ENCODE measurements at regions of chr1 and their contacts with region 1.

Region 1: DNA sequence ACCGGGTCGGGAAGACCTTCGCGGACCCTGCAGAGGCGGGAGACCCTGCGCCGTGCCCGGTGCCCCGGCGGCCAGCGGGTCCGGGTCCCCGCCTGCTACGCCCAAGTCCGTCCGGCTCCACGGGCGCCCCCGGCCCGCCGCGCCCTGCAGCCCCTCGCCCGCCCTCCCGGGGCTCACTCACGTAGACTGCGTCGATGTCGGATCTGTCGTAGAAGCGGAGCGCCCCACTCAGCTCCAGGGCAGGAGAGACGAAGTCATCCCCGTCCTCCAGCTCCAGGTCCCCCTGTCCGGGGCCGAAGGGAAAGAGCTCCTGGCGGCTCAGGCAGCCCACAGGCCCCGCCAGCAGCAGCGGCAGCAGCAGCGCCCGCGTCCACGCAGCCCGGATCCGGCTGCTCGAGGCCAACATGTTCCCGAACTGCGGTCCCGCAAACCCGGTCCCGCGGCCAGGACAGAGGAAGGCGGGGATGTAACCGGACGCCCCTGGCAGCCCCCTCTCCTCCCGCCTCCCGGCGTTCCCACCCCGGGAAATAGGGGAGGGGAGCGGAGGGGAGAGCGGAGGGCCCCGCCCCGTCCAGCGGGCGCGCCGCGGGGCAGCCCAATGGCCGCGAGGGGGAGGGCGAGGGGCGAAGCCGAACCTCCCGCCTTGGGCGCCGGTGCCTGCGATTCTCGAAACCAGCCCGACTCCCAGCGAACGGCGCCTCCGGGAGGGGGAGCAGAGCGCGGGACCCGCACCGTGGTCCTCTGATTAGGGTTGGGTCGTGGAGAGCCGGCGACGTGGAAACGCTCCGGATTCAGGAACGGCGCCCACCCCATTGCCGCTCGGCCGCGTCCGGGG is at the start of gene NID1:
- DNase-seq: peak; percentile 56
- CTCF ChIP-seq: peak; percentile 36

Region 2: GRCh38 chr1:235557495-235557894 is 507.4 kb before region 1 on chr1:
- CTCF ChIA-PET with region 1: no interaction called
- POLR2A ChIA-PET with region 1: no interaction called
- DNase-seq: no peak
- CTCF ChIP-seq: no peak

Region 3: DNA sequence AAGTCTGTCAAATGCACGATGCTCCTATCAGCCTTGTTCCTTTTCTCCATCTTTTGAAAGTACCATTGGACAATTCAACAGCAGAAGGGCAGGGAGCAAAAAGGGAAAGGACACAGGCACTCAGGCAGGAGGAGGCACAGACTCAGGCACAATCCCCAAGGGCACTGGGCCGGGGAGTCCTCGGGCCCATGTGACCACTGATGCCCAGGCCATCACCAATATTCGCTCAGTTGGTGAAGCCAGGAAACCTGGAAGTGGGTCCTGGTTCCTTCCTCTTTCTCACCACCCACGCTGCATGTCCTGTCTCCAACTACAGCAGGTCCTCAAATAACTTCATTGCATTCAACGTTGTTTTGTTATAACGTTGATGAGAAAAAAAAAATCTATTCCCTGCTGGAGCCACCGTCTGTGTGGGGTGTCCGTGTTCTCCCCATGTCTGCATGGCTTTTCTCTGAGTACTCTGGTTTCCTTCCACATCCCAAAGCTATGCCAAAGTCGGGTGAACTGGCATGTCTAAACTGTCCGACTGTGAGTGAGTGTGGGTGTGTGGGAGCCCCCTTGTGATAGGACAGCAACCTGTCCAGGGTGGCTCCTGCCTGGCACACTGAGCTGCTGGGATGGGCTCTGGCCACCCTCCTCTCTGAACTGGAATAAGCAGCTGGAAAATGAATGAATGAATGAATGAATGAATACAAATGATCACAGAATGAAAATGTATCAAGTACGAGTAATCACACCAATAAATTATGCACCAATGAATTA is 12.5 kb before region 1 on chr1:
- CTCF ChIA-PET with region 1: interaction called, 11 read pairs
- POLR2A ChIA-PET with region 1: no interaction called
- DNase-seq: no peak
- CTCF ChIP-seq: no peak

Measured in GM10248 (cell line).